CD4-positive, alpha-beta memory T cell (primary cell): ENCODE measurements at regions of chr12 and their contacts with region 1.

Region 1: DNA sequence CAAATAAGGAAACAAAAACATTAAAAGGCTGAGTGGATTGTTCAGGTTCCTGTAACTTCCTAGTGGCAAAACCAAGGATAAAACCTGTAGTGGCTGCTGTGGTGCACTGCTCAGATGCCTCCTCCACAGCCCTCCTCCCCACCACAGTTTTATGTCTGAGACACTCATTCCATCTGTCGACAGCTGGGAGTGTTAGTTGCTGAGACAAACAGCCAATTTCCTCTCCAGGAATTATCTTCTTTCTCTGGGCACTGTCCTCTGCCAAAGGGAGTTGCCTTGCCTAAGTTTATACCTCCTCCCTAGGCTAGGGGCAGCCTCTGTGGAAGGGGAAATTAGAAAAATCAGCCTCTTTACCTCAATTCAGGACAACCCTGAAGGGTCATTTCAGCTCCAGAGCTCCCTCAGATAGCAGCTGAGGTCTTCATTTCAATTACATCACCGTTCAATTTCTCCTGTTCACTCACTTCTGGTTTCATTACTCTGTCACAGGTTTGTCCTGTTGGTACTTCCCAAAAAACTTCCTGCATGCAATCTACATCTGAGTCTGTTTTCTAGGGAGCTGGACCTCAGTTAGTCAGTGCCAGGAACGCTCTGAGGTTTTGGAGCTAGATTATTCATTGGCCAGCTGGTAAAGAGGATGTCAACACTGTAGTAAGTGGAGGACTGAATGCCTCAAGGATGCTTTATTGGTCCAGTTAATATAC is 74.9 kb upstream of the ATP2B1 start:
- DNase-seq: no peak
- H3K4me3 ChIP-seq: no peak overlapping the region
- H3K4me3 Mint-ChIP-seq: no peak overlapping the region
- H3K27ac ChIP-seq: no peak overlapping the region
- H3K27ac Mint-ChIP-seq: peak overlapping the region in 1 of 7 donors; percentile 69
- H3K4me1 ChIP-seq: no peaks in the 10 kb centered on the region
- H3K4me1 Mint-ChIP-seq: peaks cover 0 to 16% (median 6%) of the 10 kb centered on the region in 4 donors
- H3K27me3 ChIP-seq: no peaks in the 10 kb centered on the region
- H3K27me3 Mint-ChIP-seq: no peaks in the 10 kb centered on the region

Region 2: GRCh38 chr12:89768586-89769486 is 14.7 kb before region 1 on chr12:
- CTCF ChIA-PET with region 1: interaction called, 4 read pairs
- POLR2A ChIA-PET with region 1: no interaction called
- intact Hi-C with region 1: loop called (anchors 2 kb)
- DNase-seq: no peak
- H3K4me3 ChIP-seq: no peak overlapping the region
- H3K4me3 Mint-ChIP-seq: peak overlapping the region in 2 of 8 donors; percentile 15 to 20
- H3K27ac ChIP-seq: no peak overlapping the region
- H3K27ac Mint-ChIP-seq: peak overlapping the region in 3 of 7 donors; percentile 9 to 46 (median 15)
- H3K4me1 ChIP-seq: peaks cover 42% of the 10 kb centered on the region
- H3K4me1 Mint-ChIP-seq: peaks cover 40 to 78% (median 58%) of the 10 kb centered on the region in 4 donors
- H3K27me3 ChIP-seq: no peaks in the 10 kb centered on the region
- H3K27me3 Mint-ChIP-seq: no peaks in the 10 kb centered on the region